ENCODE measurements at regions of chr3 and their contacts with region 1.

Region 1: DNA sequence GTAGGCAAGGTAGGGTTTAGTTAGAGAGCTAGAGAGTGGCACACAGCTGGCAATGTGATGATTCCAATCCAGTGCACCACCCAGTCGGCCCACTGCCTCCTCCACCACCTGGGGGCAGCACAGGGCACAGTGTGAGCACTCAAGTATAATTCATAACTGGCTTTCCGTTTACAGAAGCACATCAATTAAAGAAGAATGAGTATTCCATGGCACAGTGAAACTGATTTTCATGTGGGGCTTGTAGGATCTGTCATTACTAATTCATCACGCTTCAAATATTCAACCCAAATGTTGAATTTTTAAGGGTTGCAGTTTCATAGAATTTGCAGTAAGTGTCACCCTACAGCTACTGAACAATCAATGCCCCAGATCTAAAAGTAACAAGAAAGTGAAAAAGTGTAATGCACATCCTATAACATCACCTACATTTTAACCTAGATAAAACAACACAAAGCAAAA is 149.9 kb downstream of the IGSF11 start:
- DNase-seq: peak; percentile 67 to 84 (median 79)
- H3K4me3 ChIP-seq: no peak overlapping the region
- H3K27ac ChIP-seq: no peak overlapping the region
- H3K4me1 ChIP-seq: no peaks in the 10 kb centered on the region
- H3K27me3 ChIP-seq: no peaks in the 10 kb centered on the region
- CTCF ChIP-seq: peak; percentile 75 to 83 (median 77)
- EP300 ChIP-seq: no peak
- POLR2A ChIP-seq: no peak

Region 2: GRCh38 chr3:119098619-119099222 is 213.9 kb after region 1 on chr3:
- intact Hi-C with region 1: loop called (anchors 2 to 10 kb)
- DNase-seq: no peak
- H3K4me3 ChIP-seq: no peak overlapping the region
- H3K27ac ChIP-seq: no peak overlapping the region
- H3K4me1 ChIP-seq: no peaks in the 10 kb centered on the region
- H3K27me3 ChIP-seq: no peaks in the 10 kb centered on the region
- CTCF ChIP-seq: peak; percentile 54 to 78 (median 63)
- EP300 ChIP-seq: no peak
- POLR2A ChIP-seq: no peak

Measured in ovary (tissue), 10 donors.